Activated CD4-positive, alpha-beta memory T cell treated with anti-CD3 and anti-CD28 coated beads, Interleukin-2, amount 10 ng/mL, durations not matched to agents 7 days and 5 days (primary cell): ENCODE measurements at regions of chr6 and their contacts with region 1.

Region 1: GRCh38 chr6:137415127-137415833 is 78.9 kb downstream of the OLIG3 start:
- DNase-seq: peak; percentile 78
- H3K4me3 Mint-ChIP-seq: peak overlapping the region; percentile 76
- H3K27ac Mint-ChIP-seq: peak overlapping the region; percentile 79
- H3K4me1 Mint-ChIP-seq: peaks cover 13% of the 10 kb centered on the region
- H3K27me3 Mint-ChIP-seq: no peaks in the 10 kb centered on the region

Region 2: DNA sequence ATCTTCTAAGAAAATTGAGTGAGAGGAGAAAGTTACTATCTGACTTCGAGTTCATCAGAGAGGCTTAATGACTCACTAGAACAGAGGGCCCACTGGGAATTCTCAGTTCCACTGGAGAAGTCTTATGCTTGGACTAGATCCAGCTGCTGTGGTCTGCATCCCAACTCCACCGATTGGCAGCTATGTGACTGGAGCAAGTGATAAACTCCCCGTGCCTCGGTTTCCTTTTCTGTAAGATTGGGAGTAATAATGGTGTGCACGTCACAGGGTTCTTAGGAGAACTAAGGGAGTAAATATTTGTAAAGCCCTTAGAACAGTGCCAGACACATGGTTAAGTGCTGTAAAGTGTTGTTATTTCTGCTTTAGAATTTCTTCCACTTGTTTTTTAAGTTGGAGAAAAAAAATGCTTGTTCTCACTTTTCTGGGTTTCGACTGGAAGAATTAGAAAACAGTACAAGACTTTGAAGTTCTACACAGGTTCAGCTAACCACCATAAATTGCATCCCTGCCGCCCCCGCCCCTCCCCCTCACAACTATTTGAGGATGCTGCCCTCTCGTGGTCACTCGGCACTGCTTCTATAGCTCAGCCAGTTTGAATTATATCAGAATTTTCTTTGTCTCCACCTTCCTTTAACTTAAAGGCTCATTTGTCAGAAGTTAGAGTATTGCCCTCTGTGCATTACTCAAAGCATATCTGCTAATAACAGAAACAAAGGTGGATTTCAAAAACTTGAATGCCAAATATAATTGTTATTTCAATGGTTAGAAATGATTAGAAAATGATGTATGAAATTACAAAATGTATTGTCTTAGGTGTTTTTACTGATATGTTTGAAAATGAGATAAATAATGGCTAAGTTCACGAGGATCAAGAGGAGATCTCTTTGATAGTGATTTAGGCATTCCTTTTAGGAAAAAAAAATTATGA is 101.1 kb before region 1 on chr6:
- CTCF ChIA-PET with region 1: interaction called, 10 read pairs
- POLR2A ChIA-PET with region 1: no interaction called
- DNase-seq: peak; percentile 72
- H3K4me3 Mint-ChIP-seq: no peak overlapping the region
- H3K27ac Mint-ChIP-seq: no peak overlapping the region
- H3K4me1 Mint-ChIP-seq: peaks cover 4% of the 10 kb centered on the region
- H3K27me3 Mint-ChIP-seq: peaks cover 6% of the 10 kb centered on the region

Region 3: GRCh38 chr6:137341681-137342195 is 73.5 kb before region 1 on chr6:
- CTCF ChIA-PET with region 1: interaction called, 106 read pairs
- POLR2A ChIA-PET with region 1: interaction called, 18 read pairs
- DNase-seq: peak; percentile 70
- H3K4me3 Mint-ChIP-seq: peak overlapping the region; percentile 67
- H3K27ac Mint-ChIP-seq: no peak overlapping the region
- H3K4me1 Mint-ChIP-seq: peaks cover 23% of the 10 kb centered on the region
- H3K27me3 Mint-ChIP-seq: peaks cover 6% of the 10 kb centered on the region

Region 4: GRCh38 chr6:137389150-137389704 is 26.1 kb before region 1 on chr6:
- CTCF ChIA-PET with region 1: interaction called, 12 read pairs
- POLR2A ChIA-PET with region 1: interaction called, 3 read pairs
- DNase-seq: peak; percentile 83
- H3K4me3 Mint-ChIP-seq: peak overlapping the region; percentile 37
- H3K27ac Mint-ChIP-seq: peak overlapping the region; percentile 83
- H3K4me1 Mint-ChIP-seq: peaks cover 50% of the 10 kb centered on the region
- H3K27me3 Mint-ChIP-seq: no peaks in the 10 kb centered on the region

Region 5: DNA sequence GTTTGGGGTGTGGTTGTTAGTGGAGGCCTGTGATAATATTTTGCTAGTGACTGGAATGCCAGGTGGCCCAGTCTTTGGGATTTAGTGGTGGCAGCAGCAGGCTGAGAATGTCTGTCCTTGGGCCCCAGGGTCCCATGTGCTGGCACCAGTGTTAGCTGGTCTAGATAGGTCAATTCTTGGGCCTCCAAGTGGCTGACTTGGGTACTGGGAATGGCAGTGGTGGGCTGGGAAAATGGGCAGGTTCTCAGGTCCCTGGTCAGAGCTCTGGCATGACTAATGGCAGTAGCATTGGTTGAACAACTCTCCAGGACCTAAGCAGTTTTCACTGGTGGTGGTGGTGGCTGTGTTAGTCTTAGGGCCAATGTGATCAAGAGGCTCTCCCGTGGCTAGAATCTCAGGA is 28.6 kb after region 1 on chr6:
- CTCF ChIA-PET with region 1: no interaction called
- POLR2A ChIA-PET with region 1: no interaction called
- DNase-seq: no peak
- H3K4me3 Mint-ChIP-seq: no peak overlapping the region
- H3K27ac Mint-ChIP-seq: no peak overlapping the region
- H3K4me1 Mint-ChIP-seq: peaks cover 5% of the 10 kb centered on the region
- H3K27me3 Mint-ChIP-seq: peaks cover 13% of the 10 kb centered on the region

Region 6: DNA sequence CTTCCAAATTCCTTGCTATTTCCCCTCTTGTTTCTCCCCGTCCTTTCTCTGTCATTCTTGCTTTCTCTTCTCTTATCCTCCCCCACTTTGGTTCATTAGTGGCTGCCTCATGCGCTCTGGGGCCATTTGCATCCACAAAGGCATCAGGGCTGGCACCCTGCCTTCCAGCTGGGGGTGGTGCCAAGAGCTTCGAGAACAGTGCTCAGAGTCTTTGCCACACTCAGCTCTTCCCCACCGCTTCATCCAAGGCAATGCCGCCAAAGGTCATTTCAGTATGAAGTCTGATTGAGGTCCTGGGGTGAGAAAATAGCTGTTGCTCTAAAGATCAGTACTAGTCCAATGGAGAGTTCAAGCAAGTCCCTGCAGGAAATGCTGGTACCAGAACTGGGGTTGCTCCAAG is 56.2 kb after region 1 on chr6:
- CTCF ChIA-PET with region 1: no interaction called
- POLR2A ChIA-PET with region 1: no interaction called
- DNase-seq: no peak
- H3K4me3 Mint-ChIP-seq: no peak overlapping the region
- H3K27ac Mint-ChIP-seq: no peak overlapping the region
- H3K4me1 Mint-ChIP-seq: no peaks in the 10 kb centered on the region
- H3K27me3 Mint-ChIP-seq: peaks cover 26% of the 10 kb centered on the region